IMR-90 (cell line): ENCODE measurements at regions of chr1 and their contacts with region 1.

Region 1: DNA sequence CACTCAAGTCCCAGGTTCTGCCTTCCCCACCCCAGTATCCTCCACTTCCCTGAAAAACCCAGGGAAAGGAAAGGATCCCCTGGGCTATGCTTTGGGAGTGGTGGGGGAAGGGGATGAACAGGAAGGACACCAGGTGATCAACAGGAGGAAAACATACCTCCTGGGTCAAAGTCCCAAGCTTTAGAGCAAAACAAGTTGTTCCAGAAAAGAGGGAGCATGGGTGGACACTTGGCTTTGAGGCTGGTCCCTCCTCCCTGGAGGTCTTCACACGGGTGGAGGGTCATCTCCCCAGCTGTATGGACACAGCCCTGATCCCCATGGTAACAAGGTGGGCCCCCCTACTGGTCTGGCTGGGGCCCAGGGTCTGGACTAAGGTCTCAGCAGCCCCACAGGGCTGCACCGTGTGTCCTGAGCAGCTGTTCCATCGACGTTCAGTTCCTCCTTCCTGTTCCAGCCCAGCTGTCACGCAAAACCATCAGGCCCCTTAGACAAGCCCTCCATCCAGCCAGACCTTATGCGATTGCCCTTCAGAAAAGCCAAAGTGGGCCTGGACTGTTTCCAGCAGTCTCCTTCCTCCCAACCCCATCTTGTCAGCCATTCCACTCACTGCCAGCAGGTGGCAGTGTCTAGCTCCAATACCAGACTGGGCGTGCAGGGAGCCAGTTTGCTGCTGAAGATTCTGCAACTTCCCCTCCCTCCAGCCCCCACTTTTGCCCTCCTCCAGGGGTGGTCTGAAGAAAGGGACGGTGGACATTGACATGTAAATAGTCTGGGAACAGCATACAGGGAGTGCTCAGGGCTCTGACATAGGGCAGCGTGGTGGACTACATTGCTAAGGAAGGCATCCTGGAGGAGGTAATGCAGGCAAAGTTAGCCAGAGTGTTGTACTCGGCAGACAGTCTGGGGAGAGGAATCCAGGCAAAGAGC is 2.9 kb upstream of the PDZK1IP1 start:
- DNase-seq: peak; percentile 53
- ATAC-seq: peak; percentile 79
- H3K4me3 ChIP-seq: no peak overlapping the region
- H3K27ac ChIP-seq: no peak overlapping the region
- H3K4me1 ChIP-seq: peaks cover 2% of the 10 kb centered on the region; the same call in 1 of the 2 replicates
- H3K27me3 ChIP-seq: peaks cover 6% of the 10 kb centered on the region
- CTCF ChIP-seq: peak; percentile 91
- POLR2A ChIP-seq: no peak
- RAD21 ChIP-seq: peak; percentile 78

Region 2: DNA sequence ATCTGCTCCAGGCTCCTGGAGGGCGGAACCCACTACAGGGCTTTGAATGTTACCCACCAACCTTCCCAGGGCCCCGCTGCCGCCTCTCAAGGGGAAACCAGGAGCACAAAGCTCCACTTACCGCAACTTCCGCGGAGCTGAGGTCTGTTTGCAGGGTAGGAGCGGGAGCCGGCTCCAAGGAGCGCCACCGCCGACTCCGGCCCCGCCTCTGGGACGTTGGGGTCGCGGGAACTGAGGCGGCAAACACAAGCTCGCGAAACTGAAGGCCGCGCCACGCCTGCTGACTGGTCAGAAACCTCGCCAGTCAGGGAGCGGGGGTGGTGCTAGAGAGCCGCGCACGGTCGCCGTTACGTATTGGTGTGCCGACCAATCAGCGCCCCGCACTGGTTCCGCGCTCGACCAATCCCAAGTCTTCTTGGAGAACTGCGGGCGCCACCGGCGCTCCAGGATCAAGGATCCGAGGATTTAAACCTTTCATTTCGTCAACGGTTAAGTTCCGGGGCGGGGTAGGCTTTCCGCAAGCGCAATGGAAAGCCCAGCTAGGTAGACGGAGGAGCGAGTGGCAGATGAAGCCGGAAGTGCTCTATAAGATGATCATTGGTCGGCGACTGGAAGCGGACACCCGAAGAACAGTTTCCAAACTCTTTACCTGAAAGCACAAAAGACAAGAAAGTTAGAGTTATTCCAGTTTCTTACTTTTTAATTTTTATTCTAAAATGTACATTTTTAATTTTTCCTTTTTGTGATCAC is 121.4 kb after region 1 on chr1 and contains the start of gene STIL:
- CTCF ChIA-PET with region 1: no interaction called
- POLR2A ChIA-PET with region 1: no interaction called
- dilution Hi-C with region 1: no loop called
- in situ Hi-C with region 1: no loop called
- intact Hi-C with region 1: loop called (anchors 5 kb)
- DNase-seq: peak; percentile 100
- ATAC-seq: peak; percentile 96
- H3K4me3 ChIP-seq: peak within 1 kb of the TSS; percentile 62
- H3K27ac ChIP-seq: peak within 1 kb of the TSS; percentile 86
- H3K4me1 ChIP-seq: no peaks in the 10 kb centered on the region; the same call in 1 of the 2 replicates
- H3K27me3 ChIP-seq: no peaks in the 10 kb centered on the region
- CTCF ChIP-seq: no peak
- POLR2A ChIP-seq: peak; percentile 92
- RAD21 ChIP-seq: no peak
- total RNA-seq, gene STIL: 17.2 and 19.2 TPM in 2 replicates

Region 3: GRCh38 chr1:47378147-47378546 is 185.4 kb after region 1 on chr1:
- CTCF ChIA-PET with region 1: interaction called, 3 read pairs
- POLR2A ChIA-PET with region 1: no interaction called
- dilution Hi-C with region 1: no loop called
- in situ Hi-C with region 1: no loop called
- intact Hi-C with region 1: loop called (anchors 5 kb)
- DNase-seq: peak; percentile 62
- ATAC-seq: peak; percentile 46
- H3K4me3 ChIP-seq: no peak overlapping the region
- H3K27ac ChIP-seq: no peak overlapping the region
- H3K4me1 ChIP-seq: peaks cover 8% of the 10 kb centered on the region
- H3K27me3 ChIP-seq: no peaks in the 10 kb centered on the region
- CTCF ChIP-seq: no peak
- POLR2A ChIP-seq: no peak
- RAD21 ChIP-seq: no peak

Region 4: DNA sequence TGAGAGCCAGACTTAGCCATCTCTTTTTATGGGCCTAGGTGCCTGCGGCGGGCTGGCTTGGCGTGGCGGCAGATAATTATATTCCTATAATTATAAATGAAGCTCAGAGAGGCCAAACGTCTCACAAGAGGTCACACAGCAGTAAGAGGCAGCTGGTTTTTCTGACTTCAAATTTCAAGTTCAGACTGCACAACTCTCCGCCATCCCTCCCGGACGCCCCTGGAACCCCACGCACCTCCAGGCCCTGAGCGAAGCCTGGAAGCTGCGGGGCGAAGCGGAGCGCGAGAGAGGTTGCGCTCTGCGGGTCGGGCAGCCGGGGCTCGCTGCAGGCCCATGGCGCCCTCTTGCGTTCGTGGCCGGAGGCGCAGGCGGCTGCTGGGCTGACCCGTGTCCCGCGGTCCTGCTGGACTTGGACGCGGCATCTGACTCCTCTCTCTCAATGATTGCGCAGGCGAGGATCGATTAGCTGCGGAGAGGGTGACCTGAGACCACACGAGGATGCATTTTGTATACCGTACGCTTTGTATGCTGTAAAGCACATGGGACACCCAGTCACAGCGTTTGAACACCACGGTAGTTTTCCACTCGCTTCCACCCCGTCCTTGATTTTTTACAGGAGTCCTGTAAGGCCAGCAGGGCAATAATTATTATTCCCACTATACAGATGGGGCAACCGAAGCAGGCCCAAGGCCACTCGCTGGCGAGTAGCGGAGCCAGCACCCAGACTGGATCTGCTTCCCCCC is 517.8 kb after region 1 on chr1:
- CTCF ChIA-PET with region 1: interaction called, 4 read pairs
- POLR2A ChIA-PET with region 1: no interaction called
- dilution Hi-C with region 1: no loop called
- in situ Hi-C with region 1: loop called (anchors 10 kb)
- intact Hi-C with region 1: loop called (anchors 5 kb)
- DNase-seq: peak; percentile 37
- ATAC-seq: peak; percentile 93
- H3K4me3 ChIP-seq: no peak overlapping the region
- H3K27ac ChIP-seq: no peak overlapping the region
- H3K4me1 ChIP-seq: no peaks in the 10 kb centered on the region; the same call in 1 of the 2 replicates
- H3K27me3 ChIP-seq: peaks cover 61% of the 10 kb centered on the region
- CTCF ChIP-seq: peak; percentile 95
- POLR2A ChIP-seq: 0 out of 2 replicates have a peak, but pooled peaks have one; percentile 32
- RAD21 ChIP-seq: peak; percentile 95